IMR-90 (cell line): ENCODE measurements at regions of chr13 and their contacts with region 1.

Region 1: GRCh38 chr13:85528491-85529215 is 270.6 kb downstream of the SLITRK6 start:
- DNase-seq: peak; percentile 90
- ATAC-seq: peak; percentile 86
- H3K4me3 ChIP-seq: peak overlapping the region; percentile 24; the same call in 1 of the 2 replicates
- H3K27ac ChIP-seq: peak overlapping the region; percentile 35
- H3K4me1 ChIP-seq: peaks cover 6% of the 10 kb centered on the region
- H3K27me3 ChIP-seq: no peaks in the 10 kb centered on the region
- CTCF ChIP-seq: no peak
- POLR2A ChIP-seq: no peak
- RAD21 ChIP-seq: no peak

Region 2: DNA sequence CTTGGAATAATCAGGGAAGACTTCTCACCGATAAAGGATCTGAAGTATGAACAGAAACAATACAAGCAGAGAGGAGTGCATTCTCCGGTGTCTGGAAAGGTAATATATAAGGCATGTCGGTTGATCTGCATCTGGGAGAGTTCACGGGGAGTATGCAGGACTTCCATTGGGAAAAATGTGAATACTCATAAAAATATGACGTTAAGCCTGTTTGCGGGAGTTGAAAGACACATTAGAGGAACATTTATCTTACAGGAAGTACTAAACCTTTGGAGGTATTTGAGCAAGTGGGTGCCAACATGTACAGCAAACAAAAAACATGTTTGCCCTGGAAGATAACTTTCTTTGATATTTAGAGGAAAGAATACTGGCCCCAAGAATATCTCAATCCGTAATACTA is 16.2 kb before region 1 on chr13:
- CTCF ChIA-PET with region 1: interaction called, 10 read pairs
- POLR2A ChIA-PET with region 1: no interaction called
- dilution Hi-C with region 1: no loop called
- in situ Hi-C with region 1: no loop called
- intact Hi-C with region 1: no loop called
- DNase-seq: no peak
- ATAC-seq: no peak
- H3K4me3 ChIP-seq: no peak overlapping the region
- H3K27ac ChIP-seq: no peak overlapping the region
- H3K4me1 ChIP-seq: peaks cover 9% of the 10 kb centered on the region
- H3K27me3 ChIP-seq: no peaks in the 10 kb centered on the region
- CTCF ChIP-seq: no peak
- POLR2A ChIP-seq: no peak
- RAD21 ChIP-seq: no peak

Region 3: DNA sequence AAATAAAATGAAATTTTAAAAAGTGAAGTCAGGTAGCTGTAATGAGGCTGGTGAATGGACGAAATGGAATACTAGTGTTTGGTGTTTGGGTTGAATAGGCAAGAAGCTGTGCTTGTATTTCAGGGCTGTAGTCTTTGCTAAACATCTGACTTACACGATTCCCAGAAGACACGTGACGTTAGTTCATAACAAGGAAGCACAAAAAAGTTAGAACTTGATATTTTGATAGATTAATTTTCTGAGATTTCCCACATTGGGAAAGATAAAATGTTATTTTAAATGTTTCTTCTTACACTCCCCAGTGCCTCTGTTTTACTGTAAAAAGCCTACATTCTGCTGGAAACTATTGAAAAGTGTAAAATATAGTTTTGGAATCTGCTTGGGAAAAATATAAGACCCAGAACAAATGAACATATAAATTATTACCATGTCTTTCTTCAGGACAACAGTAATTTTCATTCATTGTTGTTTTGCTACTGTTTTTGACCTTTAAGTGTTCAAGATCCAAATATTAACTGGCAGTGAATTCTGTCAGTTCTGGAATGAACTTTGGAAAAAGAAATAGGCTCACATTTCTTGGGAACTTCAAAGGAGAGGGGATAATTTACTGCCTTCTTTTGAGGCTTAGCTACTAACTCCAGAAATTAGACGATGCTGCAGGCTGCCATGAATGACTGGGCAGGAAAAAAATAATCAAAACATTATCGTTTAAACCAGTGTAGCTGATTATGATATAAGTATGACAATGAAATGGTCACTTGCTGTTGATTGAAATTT is 29.2 kb after region 1 on chr13:
- CTCF ChIA-PET with region 1: no interaction called
- POLR2A ChIA-PET with region 1: no interaction called
- dilution Hi-C with region 1: no loop called
- in situ Hi-C with region 1: no loop called
- intact Hi-C with region 1: loop called (anchors 2 kb)
- DNase-seq: no peak
- ATAC-seq: no peak
- H3K4me3 ChIP-seq: no peak overlapping the region
- H3K27ac ChIP-seq: no peak overlapping the region
- H3K4me1 ChIP-seq: no peaks in the 10 kb centered on the region
- H3K27me3 ChIP-seq: no peaks in the 10 kb centered on the region
- CTCF ChIP-seq: no peak
- POLR2A ChIP-seq: no peak
- RAD21 ChIP-seq: no peak

Region 4: DNA sequence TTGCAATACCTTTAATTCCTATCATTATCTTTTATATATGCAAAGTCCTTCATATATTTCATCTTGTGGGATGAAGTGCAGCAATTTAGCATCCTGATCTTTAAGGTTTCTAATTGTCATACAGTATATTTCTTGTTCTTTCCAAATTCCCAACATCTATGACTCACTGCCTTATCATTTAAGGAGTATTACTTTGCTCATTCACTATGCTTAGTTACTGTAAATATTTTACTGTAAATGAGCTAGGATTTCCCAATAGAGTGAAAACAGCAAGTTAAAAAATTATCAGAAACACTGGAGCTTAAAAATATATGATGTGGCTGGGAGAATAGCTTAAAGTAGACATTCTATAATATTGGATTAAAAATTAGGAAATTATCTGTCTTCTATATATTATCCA is 200.6 kb after region 1 on chr13:
- CTCF ChIA-PET with region 1: no interaction called
- POLR2A ChIA-PET with region 1: no interaction called
- dilution Hi-C with region 1: no loop called
- in situ Hi-C with region 1: no loop called
- intact Hi-C with region 1: loop called (anchors 5 kb)
- DNase-seq: peak; percentile 78
- ATAC-seq: peak; percentile 77
- H3K4me3 ChIP-seq: no peak overlapping the region
- H3K27ac ChIP-seq: peak overlapping the region; percentile 81; the same call in 1 of the 2 replicates
- H3K4me1 ChIP-seq: peaks cover 6% of the 10 kb centered on the region; the same call in 1 of the 2 replicates
- H3K27me3 ChIP-seq: no peaks in the 10 kb centered on the region
- CTCF ChIP-seq: no peak
- POLR2A ChIP-seq: no peak
- RAD21 ChIP-seq: no peak

Region 5: GRCh38 chr13:86474971-86475370 is 946.3 kb after region 1 on chr13:
- CTCF ChIA-PET with region 1: no interaction called
- POLR2A ChIA-PET with region 1: no interaction called
- dilution Hi-C with region 1: no loop called
- in situ Hi-C with region 1: no loop called
- intact Hi-C with region 1: no loop called
- DNase-seq: no peak
- ATAC-seq: no peak
- H3K4me3 ChIP-seq: no peak overlapping the region
- H3K27ac ChIP-seq: no peak overlapping the region
- H3K4me1 ChIP-seq: no peaks in the 10 kb centered on the region
- H3K27me3 ChIP-seq: no peaks in the 10 kb centered on the region
- CTCF ChIP-seq: no peak
- POLR2A ChIP-seq: no peak
- RAD21 ChIP-seq: no peak